ENCODE measurements at regions of chr6 and their contacts with region 1.

Region 1: DNA sequence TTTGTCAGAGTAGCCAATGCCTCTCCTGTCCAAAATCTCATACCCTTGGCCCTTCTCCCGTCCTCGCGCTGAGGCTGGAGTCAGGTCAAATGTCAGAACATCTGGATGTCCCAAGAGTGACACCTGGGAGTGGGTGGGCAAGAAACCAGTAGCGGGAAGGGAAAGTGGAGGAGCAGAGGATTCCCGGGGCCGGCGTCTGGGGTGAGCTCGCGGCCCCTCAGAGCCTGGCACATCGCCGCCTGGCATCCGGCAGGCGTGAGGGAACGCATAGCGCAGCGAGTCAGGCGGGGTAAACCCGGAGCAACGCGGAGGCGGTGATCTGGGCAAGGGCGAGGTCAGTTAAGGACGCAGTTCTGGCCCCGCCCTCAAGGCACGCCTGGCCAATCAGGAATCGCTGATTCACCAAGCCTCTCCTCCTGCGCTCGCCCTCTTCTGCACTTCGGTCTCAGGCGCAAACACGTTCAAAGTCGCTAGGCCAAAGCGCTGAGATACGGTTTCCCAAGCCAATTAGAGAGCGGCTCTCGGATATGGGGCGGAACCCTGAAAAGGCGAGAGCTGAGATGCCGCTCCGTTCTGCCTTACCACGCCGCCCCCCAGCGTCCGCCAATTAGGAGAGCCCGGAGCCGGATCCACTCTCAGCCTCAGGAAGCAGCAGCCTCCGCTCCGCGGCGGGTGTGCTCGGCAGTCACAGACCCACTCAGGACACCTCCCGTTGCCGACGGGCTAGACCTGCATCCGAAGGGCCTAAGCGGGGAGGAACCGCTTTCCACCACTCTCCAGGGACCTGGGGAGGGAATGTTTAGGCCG is 22.5 kb downstream of the VPS52 start:
- DNase-seq: peak; percentile 70 to 97
- ATAC-seq: peak; percentile 95 to 96
- H3K4me3 ChIP-seq: peak overlapping the region; percentile 68
- H3K27ac ChIP-seq: peak overlapping the region; percentile 91 to 92
- H3K4me1 ChIP-seq: peaks cover 11% of the 10 kb centered on the region
- CTCF ChIP-seq: no peak
- EP300 ChIP-seq: no peak
- POLR2A ChIP-seq: peak; percentile 79
- RAD21 ChIP-seq: no peak

Region 2: DNA sequence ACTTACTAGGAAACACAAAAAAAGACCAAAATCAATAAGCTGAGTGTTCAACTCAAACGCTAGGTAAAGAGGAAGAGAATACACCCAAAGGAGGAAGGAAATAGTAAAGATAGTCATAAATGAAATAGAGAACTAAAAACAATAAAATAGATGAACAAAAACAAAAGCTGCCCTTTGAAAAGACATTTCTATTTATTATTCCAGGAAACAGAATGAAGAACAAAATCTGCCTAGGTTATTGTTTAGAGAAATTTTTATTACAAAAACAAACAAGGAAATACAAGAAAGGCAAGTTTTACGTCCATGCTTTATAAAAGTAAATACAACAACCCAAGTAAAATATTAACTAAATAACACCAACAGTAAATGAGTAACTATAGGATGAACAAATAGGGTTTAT is 328.4 kb before region 1 on chr6:
- CTCF ChIA-PET with region 1: no interaction called
- POLR2A ChIA-PET with region 1: no interaction called
- DNase-seq: peak in 1 of 2 experiments; percentile 22
- ATAC-seq: peak in 1 of 2 experiments; percentile 50; a peak in 1 of 6 replicates
- H3K4me3 ChIP-seq: peak overlapping the region; percentile 16; the same call in 1 of the 3 replicates
- H3K27ac ChIP-seq: peak overlapping the region in 1 of 2 experiments; percentile 73; a peak in 3 of 6 replicates
- H3K4me1 ChIP-seq: peaks cover 28% of the 10 kb centered on the region
- CTCF ChIP-seq: no peak
- EP300 ChIP-seq: no peak
- POLR2A ChIP-seq: no peak
- RAD21 ChIP-seq: no peak

Region 3: GRCh38 chr6:32971581-32972352 is 277.4 kb before region 1 on chr6:
- CTCF ChIA-PET with region 1: interaction called, 5 read pairs
- POLR2A ChIA-PET with region 1: interaction called, 17 read pairs
- DNase-seq: peak; percentile 79 to 99
- ATAC-seq: peak; percentile 49 to 70
- H3K4me3 ChIP-seq: peak overlapping the region; percentile 72
- H3K27ac ChIP-seq: peak overlapping the region; percentile 99 to 100
- H3K4me1 ChIP-seq: peaks cover 22% of the 10 kb centered on the region
- CTCF ChIP-seq: no peak
- EP300 ChIP-seq: no peak
- POLR2A ChIP-seq: peak; percentile 99
- RAD21 ChIP-seq: no peak

Region 4: DNA sequence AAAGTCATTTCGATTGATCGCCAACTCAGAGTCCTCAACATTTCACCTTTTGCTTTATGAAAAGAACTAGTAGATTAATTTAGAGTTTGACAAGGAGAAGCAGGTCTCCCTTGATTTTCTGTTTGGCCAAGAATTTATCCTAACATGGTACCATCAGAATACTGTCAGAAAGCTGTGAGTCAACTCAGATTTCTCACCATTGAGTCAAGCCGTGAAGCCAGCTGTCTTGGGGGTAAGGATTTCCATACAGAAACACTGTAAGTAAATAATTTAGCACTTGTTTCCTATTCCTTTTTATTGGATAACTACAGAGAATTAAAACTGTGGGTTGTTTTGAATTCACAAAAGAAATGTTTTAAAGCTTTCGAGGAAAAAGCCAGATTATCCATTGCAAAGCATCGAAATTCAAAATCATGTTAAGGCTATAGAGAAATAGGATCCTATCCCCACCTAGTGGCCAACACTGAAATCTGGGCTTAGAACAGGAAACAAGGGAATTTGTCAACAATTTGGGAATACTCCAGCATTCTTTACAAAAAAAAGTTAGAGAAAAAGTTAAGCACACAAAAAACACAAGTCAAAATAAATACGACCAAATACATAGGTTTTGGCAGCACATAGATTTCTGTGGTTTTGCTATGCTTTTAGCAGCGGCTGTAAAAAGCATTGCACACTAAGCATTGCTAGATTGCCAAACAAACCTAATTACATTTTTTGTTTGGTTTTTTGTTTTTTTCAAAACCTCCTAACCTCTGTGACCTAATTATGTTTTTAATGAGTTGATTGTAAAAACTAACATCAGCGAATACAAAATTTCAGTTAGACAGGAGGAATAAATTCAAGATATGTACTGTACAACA is 101.1 kb before region 1 on chr6:
- CTCF ChIA-PET with region 1: interaction called, 10 read pairs
- POLR2A ChIA-PET with region 1: no interaction called
- DNase-seq: peak in 1 of 2 experiments; percentile 46
- ATAC-seq: peak in 1 of 2 experiments; percentile 70; a peak in 3 of 6 replicates
- H3K4me3 ChIP-seq: no peak overlapping the region
- H3K27ac ChIP-seq: no peak overlapping the region
- H3K4me1 ChIP-seq: no peaks in the 10 kb centered on the region
- CTCF ChIP-seq: peak; percentile 57
- EP300 ChIP-seq: no peak
- POLR2A ChIP-seq: no peak
- RAD21 ChIP-seq: peak; percentile 54 to 58

Region 5: GRCh38 chr6:33197431-33198048 is 51.6 kb before region 1 on chr6:
- CTCF ChIA-PET with region 1: interaction called, 25 read pairs
- POLR2A ChIA-PET with region 1: no interaction called
- DNase-seq: peak; percentile 67 to 68
- ATAC-seq: peak; percentile 67 to 82; a peak in 5 of 6 replicates
- H3K4me3 ChIP-seq: no peak overlapping the region
- H3K27ac ChIP-seq: no peak overlapping the region
- H3K4me1 ChIP-seq: peaks cover 20% of the 10 kb centered on the region; the same call in 2 of the 3 replicates
- CTCF ChIP-seq: peak; percentile 55
- EP300 ChIP-seq: no peak
- POLR2A ChIP-seq: no peak
- RAD21 ChIP-seq: peak in 1 of 2 experiments; percentile 46; a peak in 2 of 5 replicates

Region 6: DNA sequence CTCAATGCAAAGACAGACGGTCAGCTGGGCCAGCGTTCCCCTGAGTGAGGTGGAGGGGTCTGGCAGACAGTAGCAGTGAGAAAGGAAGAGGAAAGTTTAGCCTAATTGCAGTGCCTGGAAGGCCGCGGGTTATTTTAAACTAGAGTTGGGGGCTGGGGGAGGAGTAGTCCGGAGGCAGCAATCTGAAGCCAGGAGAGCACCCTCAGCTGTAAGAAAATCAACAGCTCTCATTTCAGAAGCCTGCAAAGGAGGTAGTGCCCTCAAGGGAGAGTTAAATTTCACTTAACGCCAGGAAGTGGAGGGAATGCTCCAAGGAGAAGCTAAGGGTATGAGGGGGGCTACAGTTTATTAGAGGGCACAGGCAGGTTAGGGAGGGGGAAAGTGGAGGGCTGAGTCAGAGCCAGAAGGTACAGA is 13.9 kb before region 1 on chr6:
- CTCF ChIA-PET with region 1: interaction called, 39 read pairs
- POLR2A ChIA-PET with region 1: no interaction called
- DNase-seq: no peak
- ATAC-seq: no peak
- H3K4me3 ChIP-seq: no peak overlapping the region
- H3K27ac ChIP-seq: no peak overlapping the region
- H3K4me1 ChIP-seq: no peaks in the 10 kb centered on the region
- CTCF ChIP-seq: no peak
- EP300 ChIP-seq: no peak
- POLR2A ChIP-seq: no peak
- RAD21 ChIP-seq: no peak

Region 7: DNA sequence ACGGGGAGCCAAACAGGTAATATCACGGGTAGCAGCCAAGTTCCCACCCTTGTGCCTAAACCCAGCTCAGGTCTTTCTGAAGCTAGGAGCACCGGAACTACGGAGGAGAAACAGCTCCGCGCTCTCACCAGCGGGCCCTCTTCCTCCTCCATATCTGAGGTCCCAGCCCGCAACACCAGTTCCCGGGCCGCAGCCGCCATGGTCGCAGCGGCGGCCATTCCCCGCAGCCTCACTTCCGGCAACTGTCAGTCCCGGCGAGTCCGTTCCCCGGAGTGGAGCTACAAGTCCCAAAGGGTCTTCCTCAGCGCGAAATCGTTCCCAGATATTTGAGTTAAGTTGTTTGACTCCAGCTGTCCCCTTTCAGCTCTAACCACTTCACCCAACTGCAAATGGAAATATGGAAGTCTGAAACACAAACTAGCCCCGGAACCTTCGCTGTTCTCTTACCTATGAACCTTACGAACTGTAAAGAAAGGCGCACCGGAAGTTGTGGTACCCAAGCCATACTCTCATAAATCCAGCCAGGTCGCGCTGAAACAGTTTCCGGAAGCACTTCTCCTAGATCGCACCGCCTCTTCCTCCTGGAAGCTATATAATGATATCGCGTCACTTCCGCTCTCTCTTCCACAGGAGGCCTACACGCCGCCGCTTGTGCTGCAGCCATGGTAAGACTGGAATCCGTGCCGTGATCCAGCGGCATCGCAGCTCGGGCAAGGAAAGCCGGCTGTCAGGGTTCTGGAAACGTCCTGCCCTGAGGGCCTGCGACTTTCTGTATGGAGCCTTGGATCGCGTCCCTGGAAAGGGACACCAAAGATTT is 22.5 kb after region 1 on chr6 and contains the starts of genes RPS18 and VPS52:
- CTCF ChIA-PET with region 1: interaction called, 33 read pairs
- POLR2A ChIA-PET with region 1: interaction called, 16 read pairs
- DNase-seq: peak; percentile 76 to 99
- ATAC-seq: peak; percentile 89 to 92
- H3K4me3 ChIP-seq: peak within 1 kb of the TSS; percentile 87
- H3K27ac ChIP-seq: peak within 1 kb of the TSS; percentile 91 to 97
- H3K4me1 ChIP-seq: peaks cover 39% of the 10 kb centered on the region
- CTCF ChIP-seq: no peak
- EP300 ChIP-seq: no peak
- POLR2A ChIP-seq: peak; percentile 98
- RAD21 ChIP-seq: no peak
- polyA plus RNA-seq, gene RPS18: 3,426 and 3,692 TPM in 2 replicates
- polyA plus RNA-seq, gene VPS52: 38.9 and 44.3 TPM in 2 replicates

Region 8: DNA sequence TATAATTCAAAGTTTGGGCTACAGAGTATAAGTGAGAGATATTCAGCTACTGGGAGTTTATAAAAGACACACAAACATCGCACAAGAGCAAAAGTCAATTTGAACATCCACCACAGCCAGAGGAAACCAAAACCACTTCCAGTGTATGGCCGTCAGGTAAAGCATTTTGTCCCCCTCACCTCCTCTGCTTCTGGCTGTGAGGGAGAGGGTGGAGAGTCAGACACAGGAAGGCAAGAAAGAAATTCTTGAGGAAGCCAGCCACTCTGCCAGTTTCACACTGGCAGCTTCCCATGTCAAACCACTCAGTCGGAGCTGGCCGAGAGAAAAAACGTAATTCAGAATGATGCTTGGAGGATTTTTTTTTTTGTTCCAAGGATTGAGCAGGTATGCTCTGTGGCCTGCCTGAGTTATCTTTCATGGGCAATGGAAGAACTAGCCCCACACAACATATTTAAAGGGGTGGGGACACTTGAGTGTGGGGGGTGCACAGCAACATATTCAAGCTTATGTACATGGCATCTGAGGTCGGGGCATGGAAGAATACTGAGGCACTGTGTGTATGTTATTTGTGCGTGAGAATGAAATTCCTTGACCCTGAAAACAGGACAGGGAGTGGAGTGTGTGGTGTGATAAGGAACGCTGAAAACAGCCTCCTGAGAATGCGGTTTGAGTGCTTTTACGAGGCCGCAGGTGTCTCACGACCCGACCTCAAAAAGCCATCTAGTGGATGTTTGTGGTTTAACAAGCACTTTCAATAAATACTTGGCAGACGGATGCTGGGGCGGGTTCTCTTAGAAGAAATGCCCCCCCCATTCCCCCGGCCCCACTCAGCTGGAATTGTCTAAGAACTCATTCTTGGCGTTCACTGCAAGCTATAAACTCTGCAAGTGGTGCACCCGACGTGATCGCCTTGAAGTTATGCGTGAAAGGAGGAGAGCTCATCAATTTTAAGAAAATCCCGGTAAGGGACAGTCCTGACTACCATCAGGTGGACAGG is 95.9 kb after region 1 on chr6:
- CTCF ChIA-PET with region 1: no interaction called
- POLR2A ChIA-PET with region 1: no interaction called
- DNase-seq: peak; percentile 35 to 73
- ATAC-seq: peak; percentile 47 to 67; a peak in 4 of 6 replicates
- H3K4me3 ChIP-seq: no peak overlapping the region
- H3K27ac ChIP-seq: no peak overlapping the region
- H3K4me1 ChIP-seq: no peaks in the 10 kb centered on the region
- CTCF ChIP-seq: peak; percentile 40
- EP300 ChIP-seq: no peak
- POLR2A ChIP-seq: no peak
- RAD21 ChIP-seq: peak; percentile 32 to 38; a peak in 2 of 5 replicates

Measured in A549 (cell line).